Caco-2 (cell line): ENCODE measurements at regions of chr11 and their contacts with region 1.

Region 1: GRCh38 chr11:62753736-62754603 is at the start of gene ZBTB3:
- DNase-seq: peak; percentile 98 to 99
- H3K4me3 ChIP-seq: peak within 1 kb of the TSS; percentile 56
- H3K4me3 Mint-ChIP-seq: peak within 1 kb of the TSS; percentile 97
- H3K27ac Mint-ChIP-seq: peak within 1 kb of the TSS; percentile 95
- H3K4me1 ChIP-seq: peaks cover 9% of the 10 kb centered on the region; the same call in 1 of the 2 replicates
- H3K4me1 Mint-ChIP-seq: no peaks in the 10 kb centered on the region
- H3K27me3 ChIP-seq: no peaks in the 10 kb centered on the region
- H3K27me3 Mint-ChIP-seq: no peaks in the 10 kb centered on the region
- CTCF ChIP-seq: no peak
- total RNA-seq, gene ZBTB3: 8.2 and 10.9 TPM in 2 replicates

Region 2: GRCh38 chr11:62479631-62480201 is 274.3 kb before region 1 on chr11:
- CTCF ChIA-PET with region 1: no interaction called
- POLR2A ChIA-PET with region 1: interaction called, 13 read pairs
- intact Hi-C with region 1: no loop called
- DNase-seq: no peak
- H3K4me3 ChIP-seq: no peak overlapping the region
- H3K4me3 Mint-ChIP-seq: peak overlapping the region; percentile 43
- H3K27ac Mint-ChIP-seq: peak overlapping the region; percentile 92
- H3K4me1 ChIP-seq: peaks cover 62% of the 10 kb centered on the region
- H3K4me1 Mint-ChIP-seq: peaks cover 40% of the 10 kb centered on the region
- H3K27me3 ChIP-seq: no peaks in the 10 kb centered on the region
- H3K27me3 Mint-ChIP-seq: no peaks in the 10 kb centered on the region
- CTCF ChIP-seq: no peak

Region 3: GRCh38 chr11:62671575-62672389 is 82.2 kb before region 1 on chr11 and contains the starts of genes LBHD1 and UQCC3:
- CTCF ChIA-PET with region 1: no interaction called
- POLR2A ChIA-PET with region 1: interaction called, 13 read pairs
- intact Hi-C with region 1: no loop called
- DNase-seq: peak; percentile 87 to 91
- H3K4me3 ChIP-seq: peak within 1 kb of the TSS; percentile 90
- H3K4me3 Mint-ChIP-seq: peak within 1 kb of the TSS; percentile 98
- H3K27ac Mint-ChIP-seq: peak within 1 kb of the TSS; percentile 99
- H3K4me1 ChIP-seq: peaks cover 27% of the 10 kb centered on the region
- H3K4me1 Mint-ChIP-seq: peaks cover 15% of the 10 kb centered on the region
- H3K27me3 ChIP-seq: no peaks in the 10 kb centered on the region
- H3K27me3 Mint-ChIP-seq: no peaks in the 10 kb centered on the region
- CTCF ChIP-seq: no peak
- total RNA-seq, gene LBHD1: 11.9 and 13.6 TPM in 2 replicates
- total RNA-seq, gene UQCC3: 23.9 and 24.0 TPM in 2 replicates

Region 4: DNA sequence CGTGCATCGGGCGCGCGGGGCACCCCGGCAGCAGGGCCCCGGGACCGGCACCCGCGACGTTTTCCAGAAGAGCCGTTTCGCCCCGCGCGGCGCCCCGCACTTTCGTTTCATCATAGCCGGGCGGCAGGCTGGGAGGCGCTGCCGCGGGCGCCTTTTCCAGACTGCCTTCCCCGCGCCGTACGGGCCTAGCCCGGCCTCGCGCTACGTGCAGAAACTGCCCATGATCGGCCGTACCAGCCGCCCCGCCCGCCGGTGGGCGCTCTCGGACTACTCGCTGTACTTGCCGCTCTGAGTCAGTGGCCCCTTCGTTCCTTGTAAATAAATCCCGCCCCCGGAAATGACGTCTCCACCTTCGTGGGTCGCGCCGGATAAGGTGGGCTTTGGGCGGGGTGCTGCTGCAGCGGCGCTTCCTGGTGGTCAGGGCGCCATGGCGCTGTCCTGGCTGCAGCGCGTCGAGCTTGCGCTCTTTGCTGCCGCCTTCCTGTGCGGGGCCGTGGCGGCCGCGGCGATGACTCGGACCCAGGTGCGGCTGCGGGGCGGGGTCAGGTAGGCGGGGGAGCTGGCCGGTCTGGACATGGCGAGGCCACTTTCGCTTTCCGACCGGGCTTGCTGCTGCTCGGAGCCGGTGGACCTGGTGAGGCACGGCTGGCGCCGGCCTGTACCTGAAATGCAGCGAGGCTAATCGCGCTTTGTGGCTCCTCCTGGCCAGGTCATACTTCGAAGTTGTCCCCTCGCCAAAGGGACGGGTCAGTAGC is 33.2 kb after region 1 on chr11 and contains the start of gene TMEM179B:
- CTCF ChIA-PET with region 1: interaction called, 48 read pairs
- POLR2A ChIA-PET with region 1: interaction called, 11 read pairs
- intact Hi-C with region 1: no loop called
- DNase-seq: peak; percentile 98
- H3K4me3 ChIP-seq: peak within 1 kb of the TSS; percentile 79
- H3K4me3 Mint-ChIP-seq: peak within 1 kb of the TSS; percentile 91
- H3K27ac Mint-ChIP-seq: peak within 1 kb of the TSS; percentile 95
- H3K4me1 ChIP-seq: peaks cover 7% of the 10 kb centered on the region
- H3K4me1 Mint-ChIP-seq: peaks cover 9% of the 10 kb centered on the region
- H3K27me3 ChIP-seq: no peaks in the 10 kb centered on the region
- H3K27me3 Mint-ChIP-seq: no peaks in the 10 kb centered on the region
- CTCF ChIP-seq: peak; percentile 24 to 82
- total RNA-seq, gene TMEM179B: 59.9 and 68.4 TPM in 2 replicates

Region 5: GRCh38 chr11:62855571-62856332 is 101.8 kb after region 1 on chr11:
- CTCF ChIA-PET with region 1: interaction called, 4 read pairs
- POLR2A ChIA-PET with region 1: interaction called, 29 read pairs
- intact Hi-C with region 1: no loop called
- DNase-seq: peak; percentile 98 to 99
- H3K4me3 ChIP-seq: peak overlapping the region; percentile 92
- H3K4me3 Mint-ChIP-seq: peak overlapping the region; percentile 77
- H3K27ac Mint-ChIP-seq: peak overlapping the region; percentile 85
- H3K4me1 ChIP-seq: peaks cover 46% of the 10 kb centered on the region
- H3K4me1 Mint-ChIP-seq: peaks cover 45% of the 10 kb centered on the region
- H3K27me3 ChIP-seq: no peaks in the 10 kb centered on the region
- H3K27me3 Mint-ChIP-seq: no peaks in the 10 kb centered on the region
- CTCF ChIP-seq: no peak